ENCODE measurements at regions of chr10 and their contacts with region 1.

Region 1: GRCh38 chr10:5684318-5684970 is at the start of gene TASOR2:
- DNase-seq: peak; percentile 95
- ATAC-seq: peak; percentile 96
- H3K4me3 ChIP-seq: peak within 1 kb of the TSS; percentile 72
- H3K27ac ChIP-seq: peak within 1 kb of the TSS; percentile 48
- H3K4me1 ChIP-seq: no peaks in the 10 kb centered on the region
- H3K27me3 ChIP-seq: no peaks in the 10 kb centered on the region
- CTCF ChIP-seq: no peak
- POLR2A ChIP-seq: peak; percentile 86
- RAD21 ChIP-seq: no peak
- total RNA-seq, gene TASOR2: 53.6 and 64.7 TPM in 2 replicates

Region 2: GRCh38 chr10:5446390-5446926 is 238.0 kb before region 1 on chr10:
- CTCF ChIA-PET with region 1: no interaction called
- POLR2A ChIA-PET with region 1: interaction called, 3 read pairs
- dilution Hi-C with region 1: no loop called
- in situ Hi-C with region 1: no loop called
- intact Hi-C with region 1: loop called (anchors 5 kb)
- DNase-seq: peak; percentile 84
- ATAC-seq: peak; percentile 91
- H3K4me3 ChIP-seq: peak overlapping the region; percentile 64
- H3K27ac ChIP-seq: peak overlapping the region; percentile 74
- H3K4me1 ChIP-seq: peaks cover 5% of the 10 kb centered on the region; the same call in 1 of the 2 replicates
- H3K27me3 ChIP-seq: no peaks in the 10 kb centered on the region
- CTCF ChIP-seq: no peak
- POLR2A ChIP-seq: peak; percentile 98
- RAD21 ChIP-seq: peak; percentile 5; the same call in 1 of the 2 replicates

Region 3: GRCh38 chr10:5629303-5630111 is 54.9 kb before region 1 on chr10:
- CTCF ChIA-PET with region 1: interaction called, 3 read pairs
- POLR2A ChIA-PET with region 1: no interaction called
- dilution Hi-C with region 1: no loop called
- in situ Hi-C with region 1: no loop called
- intact Hi-C with region 1: loop called (anchors 2 kb)
- DNase-seq: peak; percentile 96
- ATAC-seq: peak; percentile 96
- H3K4me3 ChIP-seq: no peak overlapping the region
- H3K27ac ChIP-seq: peak overlapping the region; percentile 13; the same call in 1 of the 2 replicates
- H3K4me1 ChIP-seq: peaks cover 5% of the 10 kb centered on the region; the same call in 1 of the 2 replicates
- H3K27me3 ChIP-seq: no peaks in the 10 kb centered on the region; the same call in 1 of the 2 replicates
- CTCF ChIP-seq: peak; percentile 96
- POLR2A ChIP-seq: no peak
- RAD21 ChIP-seq: peak; percentile 71

Region 4: GRCh38 chr10:5737352-5737751 is 52.9 kb after region 1 on chr10:
- CTCF ChIA-PET with region 1: no interaction called
- POLR2A ChIA-PET with region 1: no interaction called
- dilution Hi-C with region 1: no loop called
- in situ Hi-C with region 1: no loop called
- intact Hi-C with region 1: no loop called
- DNase-seq: no peak
- ATAC-seq: no peak
- H3K4me3 ChIP-seq: no peak overlapping the region
- H3K27ac ChIP-seq: no peak overlapping the region
- H3K4me1 ChIP-seq: no peaks in the 10 kb centered on the region
- H3K27me3 ChIP-seq: no peaks in the 10 kb centered on the region
- CTCF ChIP-seq: no peak
- POLR2A ChIP-seq: no peak
- RAD21 ChIP-seq: no peak

Region 5: DNA sequence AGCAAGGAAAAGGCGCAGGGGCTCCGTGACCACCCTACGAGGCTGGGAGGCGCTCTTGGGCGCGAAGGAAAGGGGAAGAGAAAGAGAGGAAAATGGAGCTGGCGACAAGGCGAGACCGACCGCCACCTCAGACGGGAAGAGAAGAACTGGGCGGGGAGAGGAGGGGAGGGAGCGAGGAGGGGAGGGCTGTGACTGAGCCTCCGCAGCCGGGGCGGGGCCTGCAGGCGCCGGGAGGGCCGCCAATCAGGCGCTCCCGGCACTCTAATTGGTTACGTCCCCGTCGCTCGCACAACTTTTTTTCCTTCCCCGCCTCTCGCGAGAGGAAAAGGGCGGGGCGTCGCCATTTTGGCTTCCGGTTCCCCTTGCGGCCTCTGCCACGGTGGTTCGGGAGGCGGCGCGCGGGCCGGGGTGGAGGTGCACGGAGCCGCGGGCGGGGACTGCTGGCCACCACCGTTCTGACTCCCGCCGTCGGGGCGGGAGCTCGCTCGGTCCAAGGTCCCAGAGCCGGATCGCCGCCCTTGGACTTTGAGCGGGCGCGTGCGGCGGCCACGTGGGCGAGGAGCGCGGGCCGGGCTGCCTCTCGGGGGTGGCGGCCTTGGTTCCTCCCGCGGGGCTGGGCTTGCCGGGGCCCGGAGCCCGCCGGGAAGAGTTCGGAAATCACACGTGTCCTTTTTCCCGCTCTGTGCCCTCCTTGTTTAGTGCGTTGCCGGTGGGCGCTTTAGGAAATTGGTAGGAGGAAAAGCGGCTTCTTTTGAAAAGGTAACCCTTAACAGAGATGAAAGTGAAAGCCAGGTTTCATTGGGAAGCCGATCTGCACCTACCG is 129.1 kb after region 1 on chr10 and contains the start of gene GDI2:
- CTCF ChIA-PET with region 1: no interaction called
- POLR2A ChIA-PET with region 1: no interaction called
- dilution Hi-C with region 1: no loop called
- in situ Hi-C with region 1: no loop called
- intact Hi-C with region 1: loop called (anchors 5 kb)
- DNase-seq: peak; percentile 95
- ATAC-seq: peak; percentile 97
- H3K4me3 ChIP-seq: peak within 1 kb of the TSS; percentile 81
- H3K27ac ChIP-seq: peak within 1 kb of the TSS; percentile 99
- H3K4me1 ChIP-seq: peaks cover 5% of the 10 kb centered on the region
- H3K27me3 ChIP-seq: no peaks in the 10 kb centered on the region
- CTCF ChIP-seq: no peak
- POLR2A ChIP-seq: peak; percentile 96
- RAD21 ChIP-seq: no peak
- total RNA-seq, gene GDI2: 396 and 608 TPM in 2 replicates

Region 6: GRCh38 chr10:5889624-5890451 is 205.4 kb after region 1 on chr10 and contains the starts of genes ANKRD16 and FBH1:
- CTCF ChIA-PET with region 1: no interaction called
- POLR2A ChIA-PET with region 1: no interaction called
- dilution Hi-C with region 1: no loop called
- in situ Hi-C with region 1: loop called (anchors 10 kb)
- intact Hi-C with region 1: loop called (anchors 5 kb)
- DNase-seq: peak; percentile 99
- ATAC-seq: peak; percentile 89
- H3K4me3 ChIP-seq: peak within 1 kb of the TSS; percentile 99
- H3K27ac ChIP-seq: peak within 1 kb of the TSS; percentile 90
- H3K4me1 ChIP-seq: peaks cover 14% of the 10 kb centered on the region
- H3K27me3 ChIP-seq: no peaks in the 10 kb centered on the region
- CTCF ChIP-seq: no peak; the same call in 1 of the 2 replicates
- POLR2A ChIP-seq: peak; percentile 89
- RAD21 ChIP-seq: no peak
- total RNA-seq, gene ANKRD16: 3.3 and 5.7 TPM in 2 replicates
- total RNA-seq, gene FBH1: 60.8 and 72.2 TPM in 2 replicates

Measured in IMR-90 (cell line).